B cell (primary cell): ENCODE measurements at regions of chr16 and their contacts with region 1.

Region 1: GRCh38 chr16:80065568-80065967 is 465.0 kb upstream of the MAF start:
- DNase-seq: no peak
- ATAC-seq: no peak
- H3K4me3 ChIP-seq: no peak overlapping the region
- H3K4me3 Mint-ChIP-seq: no peak overlapping the region
- H3K27ac ChIP-seq: no peak overlapping the region
- H3K27ac Mint-ChIP-seq: no peak overlapping the region
- H3K4me1 ChIP-seq: no peaks in the 10 kb centered on the region
- H3K4me1 Mint-ChIP-seq: no peaks in the 10 kb centered on the region
- H3K27me3 ChIP-seq: no peaks in the 10 kb centered on the region
- H3K27me3 Mint-ChIP-seq: no peaks in the 10 kb centered on the region
- CTCF ChIP-seq: no peak

Region 2: GRCh38 chr16:80034948-80035700 is 30.4 kb before region 1 on chr16:
- CTCF ChIA-PET with region 1: no interaction called
- POLR2A ChIA-PET with region 1: no interaction called
- intact Hi-C with region 1: loop called (anchors 2 kb)
- DNase-seq: no peak
- ATAC-seq: no peak
- H3K4me3 ChIP-seq: no peak overlapping the region
- H3K4me3 Mint-ChIP-seq: no peak overlapping the region
- H3K27ac ChIP-seq: no peak overlapping the region
- H3K27ac Mint-ChIP-seq: no peak overlapping the region
- H3K4me1 ChIP-seq: no peaks in the 10 kb centered on the region
- H3K4me1 Mint-ChIP-seq: no peaks in the 10 kb centered on the region
- H3K27me3 ChIP-seq: no peaks in the 10 kb centered on the region
- H3K27me3 Mint-ChIP-seq: no peaks in the 10 kb centered on the region
- CTCF ChIP-seq: no peak